ENCODE measurements at regions of chr9 and their contacts with region 1.

Region 1: DNA sequence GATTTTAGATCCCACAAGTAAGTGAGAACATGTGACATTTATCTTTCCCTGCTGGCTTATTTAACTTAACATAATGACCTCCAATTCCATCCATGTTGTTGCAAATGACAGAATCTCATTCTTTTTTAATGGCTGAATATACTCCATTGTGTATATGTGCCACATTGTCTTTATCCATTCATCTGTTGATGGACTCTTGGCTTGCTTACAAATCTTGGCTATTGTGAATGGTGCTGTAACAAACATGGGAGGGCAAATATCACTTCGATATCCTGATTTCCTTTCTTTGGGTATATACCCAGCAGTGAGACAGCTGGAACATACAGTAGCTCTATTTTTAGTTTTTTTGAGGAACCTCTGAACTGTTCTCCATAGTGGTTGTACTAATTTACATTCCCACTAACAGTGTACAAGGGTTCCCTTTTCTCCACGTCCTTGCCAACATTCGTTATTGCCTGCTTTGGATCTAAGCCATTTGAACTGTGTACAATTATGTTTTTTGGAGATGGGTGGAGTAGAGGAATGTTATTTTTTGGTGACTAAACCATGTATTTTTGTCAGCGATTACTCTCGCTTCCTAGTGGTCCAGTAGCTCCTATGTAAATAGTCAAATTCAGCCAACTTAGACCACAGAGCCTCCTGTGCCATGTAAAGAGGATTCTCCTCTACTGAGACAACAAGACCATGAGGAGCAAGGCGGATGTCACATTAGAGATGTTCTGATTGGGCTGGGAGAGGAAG is 60.6 kb downstream of the TNFSF15 start:
- DNase-seq: no peak
- ATAC-seq: no peak
- H3K4me3 ChIP-seq: no peak overlapping the region
- H3K27ac ChIP-seq: no peak overlapping the region
- H3K4me1 ChIP-seq: no peaks in the 10 kb centered on the region
- H3K27me3 ChIP-seq: no peaks in the 10 kb centered on the region
- CTCF ChIP-seq: no peak
- POLR2A ChIP-seq: no peak

Region 2: GRCh38 chr9:114538241-114538640 is 207.0 kb before region 1 on chr9:
- in situ Hi-C with region 1: no loop called
- intact Hi-C with region 1: no loop called
- DNase-seq: no peak
- ATAC-seq: no peak
- H3K4me3 ChIP-seq: no peak overlapping the region
- H3K27ac ChIP-seq: no peak overlapping the region
- H3K4me1 ChIP-seq: no peaks in the 10 kb centered on the region
- H3K27me3 ChIP-seq: peaks cover 0 to 4% (median 0%) of the 10 kb centered on the region in 3 donors
- CTCF ChIP-seq: no peak
- POLR2A ChIP-seq: no peak

Region 3: DNA sequence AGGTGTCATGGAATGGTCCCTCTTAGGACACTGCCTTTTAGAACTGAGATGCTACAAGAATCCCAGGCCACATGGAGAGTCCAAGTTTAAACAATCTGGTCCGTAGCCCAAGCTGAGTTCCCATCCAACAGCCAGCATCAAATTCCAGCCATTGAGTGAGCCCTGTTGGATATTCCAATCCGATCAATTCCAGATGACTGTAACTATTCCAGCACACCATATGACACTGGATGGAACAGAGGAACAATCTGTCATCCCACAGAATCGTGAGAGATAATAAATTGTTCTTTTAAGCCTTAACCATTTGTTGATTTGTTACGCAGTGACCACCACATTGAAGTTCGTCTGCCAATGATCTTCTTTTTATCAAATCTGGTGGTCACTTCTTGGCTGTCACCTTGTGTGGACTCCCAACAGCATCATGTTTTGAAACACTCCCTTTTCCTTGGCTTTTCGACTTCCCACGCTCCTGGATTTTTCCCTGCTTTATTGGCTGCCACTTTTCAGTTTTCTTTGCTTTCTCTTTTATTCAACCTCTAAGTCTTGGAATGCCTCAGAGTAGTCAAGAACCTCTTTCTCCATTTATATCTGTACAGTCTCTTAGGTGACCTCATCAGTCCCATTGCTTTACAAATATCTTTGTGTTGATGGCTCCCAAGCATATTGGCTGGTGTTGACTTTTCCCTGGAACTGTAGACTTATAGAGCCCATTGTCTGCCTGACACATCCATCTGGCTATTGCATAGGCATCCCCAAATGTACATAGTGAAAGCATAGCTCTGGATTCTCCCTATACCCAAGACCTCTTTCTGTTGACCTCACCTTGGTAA is 14.4 kb after region 1 on chr9:
- in situ Hi-C with region 1: no loop called
- intact Hi-C with region 1: no loop called
- DNase-seq: no peak
- ATAC-seq: no peak
- H3K4me3 ChIP-seq: no peak overlapping the region
- H3K27ac ChIP-seq: no peak overlapping the region
- H3K4me1 ChIP-seq: no peaks in the 10 kb centered on the region
- H3K27me3 ChIP-seq: no peaks in the 10 kb centered on the region
- CTCF ChIP-seq: no peak
- POLR2A ChIP-seq: no peak

Region 4: GRCh38 chr9:114805670-114806525 is 60.6 kb after region 1 on chr9 and contains the start of gene TNFSF15:
- in situ Hi-C with region 1: loop called in 1 of 4 experiments (anchors 10 kb)
- intact Hi-C with region 1: no loop called
- DNase-seq: peak; percentile 4 to 14
- ATAC-seq: peak; percentile 44 to 70
- H3K4me3 ChIP-seq: no peak within 1 kb of the TSS
- H3K27ac ChIP-seq: peak within 1 kb of the TSS in 1 of 4 donors; percentile 22
- H3K4me1 ChIP-seq: peaks cover 16 to 18% of the 10 kb centered on the region in 2 donors
- H3K27me3 ChIP-seq: no peaks in the 10 kb centered on the region
- CTCF ChIP-seq: no peak
- POLR2A ChIP-seq: no peak
- total RNA-seq, gene TNFSF15: not detected

Region 5: DNA sequence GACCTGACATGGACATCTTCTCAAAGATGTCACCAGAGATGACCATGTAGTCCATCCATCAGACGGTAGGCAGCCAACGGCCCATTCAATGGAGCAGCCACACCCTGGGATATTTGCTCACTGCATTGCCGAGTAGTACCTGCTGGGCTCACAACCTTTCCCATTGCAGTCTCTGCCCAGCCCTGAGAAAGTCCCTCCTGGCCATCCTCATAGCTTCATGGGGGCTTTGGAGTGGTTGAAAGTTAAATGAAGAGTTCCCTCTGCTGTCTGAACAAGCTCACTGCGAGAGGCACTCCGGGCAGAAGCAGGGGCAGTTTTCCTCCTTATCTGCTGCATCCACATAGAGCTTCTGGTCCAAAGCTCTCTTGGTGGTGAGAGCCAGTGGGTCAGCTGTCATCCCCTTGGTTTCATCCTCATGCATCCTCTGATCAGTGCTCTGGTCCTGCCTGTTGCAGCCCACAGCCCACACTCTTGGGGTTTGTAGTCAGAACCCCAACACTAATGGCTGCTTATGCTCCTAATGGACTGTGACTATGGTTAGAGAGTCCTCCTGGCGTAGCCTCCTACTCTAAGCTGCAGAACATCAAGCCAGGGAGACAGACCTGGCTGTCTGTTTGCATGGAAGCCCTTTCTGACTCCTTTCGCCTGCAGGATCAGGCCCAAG is 161.8 kb after region 1 on chr9:
- in situ Hi-C with region 1: loop called in 1 of 4 experiments (anchors 5 kb)
- intact Hi-C with region 1: no loop called
- DNase-seq: no peak
- ATAC-seq: no peak
- H3K4me3 ChIP-seq: no peak overlapping the region
- H3K27ac ChIP-seq: no peak overlapping the region
- H3K4me1 ChIP-seq: no peaks in the 10 kb centered on the region
- H3K27me3 ChIP-seq: no peaks in the 10 kb centered on the region
- CTCF ChIP-seq: no peak
- POLR2A ChIP-seq: no peak